Activated CD8-positive, alpha-beta T cell treated with anti-CD3 and anti-CD28 coated beads for 36 hours (primary cell): ENCODE measurements at regions of chr7 and their contacts with region 1.

Region 1: GRCh38 chr7:8190119-8190895 is 71.7 kb downstream of the ICA1 start:
- DNase-seq: peak; percentile 83
- ATAC-seq: peak; percentile 71
- H3K4me3 Mint-ChIP-seq: no peak overlapping the region
- H3K27ac Mint-ChIP-seq: no peak overlapping the region
- H3K4me1 Mint-ChIP-seq: peaks cover 17% of the 10 kb centered on the region
- H3K27me3 Mint-ChIP-seq: no peaks in the 10 kb centered on the region
- CTCF ChIP-seq: peak; percentile 79

Region 2: DNA sequence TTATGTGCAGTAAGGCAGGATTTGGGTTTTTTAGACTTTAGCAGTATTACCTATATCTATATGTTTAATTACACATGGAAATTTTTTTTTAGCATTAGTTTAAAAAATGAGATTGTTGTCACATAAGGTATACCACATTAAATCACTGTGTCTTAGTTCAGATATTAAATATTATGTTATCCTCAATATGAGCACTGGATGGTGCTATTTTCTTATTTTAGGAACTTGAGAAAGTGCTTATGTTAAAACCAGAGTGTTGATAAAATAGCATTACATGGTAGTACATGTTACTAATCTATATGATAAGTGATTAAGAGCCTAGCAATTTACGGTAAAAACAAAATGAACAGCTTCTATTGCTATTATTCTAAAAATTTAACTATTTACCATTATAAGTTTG is 594.9 kb before region 1 on chr7:
- CTCF ChIA-PET with region 1: interaction called, 12 read pairs
- POLR2A ChIA-PET with region 1: no interaction called
- intact Hi-C with region 1: no loop called
- DNase-seq: no peak
- ATAC-seq: no peak
- H3K4me3 Mint-ChIP-seq: no peak overlapping the region
- H3K27ac Mint-ChIP-seq: no peak overlapping the region
- H3K4me1 Mint-ChIP-seq: peaks cover 3% of the 10 kb centered on the region
- H3K27me3 Mint-ChIP-seq: no peaks in the 10 kb centered on the region
- CTCF ChIP-seq: no peak

Region 3: DNA sequence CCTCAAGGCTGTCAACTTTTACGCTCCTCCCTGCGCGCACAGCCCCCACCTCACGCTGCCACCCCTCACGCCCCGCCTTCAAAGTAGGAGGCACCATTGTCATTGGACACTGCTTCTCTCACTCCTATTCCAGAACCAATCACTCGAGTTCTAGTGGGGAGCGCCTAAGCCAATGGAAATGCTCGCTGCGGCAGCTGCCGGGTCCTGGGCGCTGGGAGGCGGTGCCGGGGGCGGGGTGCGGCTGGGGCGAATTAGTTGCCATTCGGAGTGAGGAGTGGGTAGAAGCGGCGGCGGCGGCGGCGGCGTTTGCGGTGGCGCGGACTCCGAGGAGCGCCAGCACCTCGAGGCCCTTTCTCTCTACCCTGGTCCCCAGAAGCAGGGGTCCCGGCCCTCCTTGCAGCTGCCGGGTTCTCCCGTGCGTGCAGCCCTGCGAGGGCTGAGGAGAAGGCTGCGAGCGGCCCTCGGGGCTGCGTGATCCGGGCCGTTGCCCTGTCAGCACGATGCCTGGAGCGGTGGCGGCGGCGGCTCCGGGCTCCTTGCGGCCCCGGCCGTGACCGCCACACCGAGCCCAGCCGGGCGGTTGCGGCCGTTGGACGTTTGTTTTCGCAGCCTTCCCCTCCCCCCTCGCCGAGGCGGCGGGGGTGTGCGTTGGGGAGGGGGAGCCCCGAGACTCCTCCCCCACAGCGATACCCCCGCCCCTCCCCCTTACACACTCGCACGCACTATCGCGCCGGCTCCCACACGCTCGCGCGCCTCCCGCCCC is 221.6 kb before region 1 on chr7 and contains the start of gene GLCCI1:
- CTCF ChIA-PET with region 1: interaction called, 11 read pairs
- POLR2A ChIA-PET with region 1: no interaction called
- intact Hi-C with region 1: no loop called
- DNase-seq: peak; percentile 98
- ATAC-seq: peak; percentile 92
- H3K4me3 Mint-ChIP-seq: peak within 1 kb of the TSS; percentile 93
- H3K27ac Mint-ChIP-seq: peak within 1 kb of the TSS; percentile 92
- H3K4me1 Mint-ChIP-seq: peaks cover 27% of the 10 kb centered on the region
- H3K27me3 Mint-ChIP-seq: no peaks in the 10 kb centered on the region
- CTCF ChIP-seq: no peak
- total RNA-seq, gene GLCCI1: 11.3 to 13.0 TPM

Region 4: DNA sequence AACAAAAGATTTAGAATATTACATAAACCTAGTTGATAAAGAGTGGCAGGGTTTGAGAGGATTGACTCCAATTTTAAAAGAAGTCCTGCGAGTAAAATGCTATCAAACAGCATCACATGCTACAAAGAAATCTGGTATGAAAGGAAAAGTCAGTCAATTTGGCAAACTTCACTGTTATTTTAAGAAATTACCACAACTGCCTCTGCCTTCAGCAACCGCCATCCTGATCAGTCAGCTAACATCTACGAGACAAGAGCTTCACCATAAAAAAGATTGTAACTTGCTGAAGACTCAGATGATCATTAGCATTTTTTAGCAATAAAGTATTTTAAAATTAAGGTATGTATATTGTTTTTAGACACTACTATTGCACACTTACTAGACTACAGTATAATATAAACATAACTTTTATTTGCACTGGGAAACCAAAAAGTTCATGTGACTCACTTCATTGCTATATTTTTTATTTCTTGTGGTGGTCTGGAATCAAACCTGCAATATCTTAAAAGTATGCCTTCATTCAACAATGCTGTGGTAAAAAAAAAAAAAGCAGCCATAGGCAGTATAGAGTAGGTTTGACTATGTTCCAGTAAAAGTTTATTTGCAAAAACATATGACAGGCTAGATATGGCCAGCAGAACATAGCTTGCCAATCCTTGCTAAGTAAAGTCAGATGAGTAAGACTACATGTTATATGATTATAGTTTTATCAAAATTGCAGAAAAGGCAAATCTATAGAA is 147.3 kb before region 1 on chr7:
- CTCF ChIA-PET with region 1: no interaction called
- POLR2A ChIA-PET with region 1: no interaction called
- intact Hi-C with region 1: no loop called
- DNase-seq: no peak
- ATAC-seq: no peak
- H3K4me3 Mint-ChIP-seq: no peak overlapping the region
- H3K27ac Mint-ChIP-seq: no peak overlapping the region
- H3K4me1 Mint-ChIP-seq: peaks cover 44% of the 10 kb centered on the region
- H3K27me3 Mint-ChIP-seq: no peaks in the 10 kb centered on the region
- CTCF ChIP-seq: no peak

Region 5: GRCh38 chr7:8125680-8126444 is 64.4 kb before region 1 on chr7:
- CTCF ChIA-PET with region 1: interaction called, 13 read pairs
- POLR2A ChIA-PET with region 1: no interaction called
- intact Hi-C with region 1: no loop called
- DNase-seq: peak; percentile 94
- ATAC-seq: peak; percentile 91
- H3K4me3 Mint-ChIP-seq: peak overlapping the region; percentile 63
- H3K27ac Mint-ChIP-seq: peak overlapping the region; percentile 98
- H3K4me1 Mint-ChIP-seq: peaks cover 78% of the 10 kb centered on the region
- H3K27me3 Mint-ChIP-seq: no peaks in the 10 kb centered on the region
- CTCF ChIP-seq: no peak

Region 6: DNA sequence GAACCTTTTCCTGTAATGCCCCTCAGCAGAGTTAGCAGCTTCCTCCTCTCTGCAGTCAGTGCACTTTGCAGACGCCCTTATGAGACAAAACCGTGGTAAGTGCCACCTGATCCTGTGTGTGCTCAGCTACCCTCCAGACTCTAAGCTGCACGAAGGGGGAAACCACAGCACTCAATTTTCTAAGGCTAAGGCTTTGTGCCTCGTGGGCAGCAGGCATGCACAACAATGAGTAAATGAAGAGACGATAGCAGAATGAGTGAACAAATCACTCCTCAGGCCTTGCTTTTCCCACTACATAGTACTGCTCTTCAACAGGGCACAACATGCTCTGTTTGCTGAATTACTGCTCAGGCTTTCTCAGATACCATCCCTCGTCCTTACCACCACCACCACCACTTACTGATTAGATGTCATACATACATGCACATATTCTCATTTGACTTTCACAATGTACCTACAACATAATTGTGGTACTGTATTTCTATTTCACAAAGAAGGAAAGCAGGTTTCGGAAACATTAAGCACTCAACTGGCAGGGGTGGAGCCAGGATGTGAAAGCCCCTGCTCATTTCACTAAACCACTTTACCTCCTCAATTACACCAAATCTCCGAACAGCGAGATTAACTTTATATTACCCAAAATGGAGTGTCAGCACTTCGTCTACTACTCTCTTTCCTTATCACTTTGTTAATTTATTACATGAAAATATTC is 13.8 kb before region 1 on chr7:
- CTCF ChIA-PET with region 1: interaction called, 24 read pairs
- POLR2A ChIA-PET with region 1: interaction called, 12 read pairs
- intact Hi-C with region 1: no loop called
- DNase-seq: peak; percentile 81
- ATAC-seq: peak; percentile 88
- H3K4me3 Mint-ChIP-seq: peak overlapping the region; percentile 65
- H3K27ac Mint-ChIP-seq: peak overlapping the region; percentile 95
- H3K4me1 Mint-ChIP-seq: peaks cover 55% of the 10 kb centered on the region
- H3K27me3 Mint-ChIP-seq: no peaks in the 10 kb centered on the region
- CTCF ChIP-seq: no peak

Region 7: DNA sequence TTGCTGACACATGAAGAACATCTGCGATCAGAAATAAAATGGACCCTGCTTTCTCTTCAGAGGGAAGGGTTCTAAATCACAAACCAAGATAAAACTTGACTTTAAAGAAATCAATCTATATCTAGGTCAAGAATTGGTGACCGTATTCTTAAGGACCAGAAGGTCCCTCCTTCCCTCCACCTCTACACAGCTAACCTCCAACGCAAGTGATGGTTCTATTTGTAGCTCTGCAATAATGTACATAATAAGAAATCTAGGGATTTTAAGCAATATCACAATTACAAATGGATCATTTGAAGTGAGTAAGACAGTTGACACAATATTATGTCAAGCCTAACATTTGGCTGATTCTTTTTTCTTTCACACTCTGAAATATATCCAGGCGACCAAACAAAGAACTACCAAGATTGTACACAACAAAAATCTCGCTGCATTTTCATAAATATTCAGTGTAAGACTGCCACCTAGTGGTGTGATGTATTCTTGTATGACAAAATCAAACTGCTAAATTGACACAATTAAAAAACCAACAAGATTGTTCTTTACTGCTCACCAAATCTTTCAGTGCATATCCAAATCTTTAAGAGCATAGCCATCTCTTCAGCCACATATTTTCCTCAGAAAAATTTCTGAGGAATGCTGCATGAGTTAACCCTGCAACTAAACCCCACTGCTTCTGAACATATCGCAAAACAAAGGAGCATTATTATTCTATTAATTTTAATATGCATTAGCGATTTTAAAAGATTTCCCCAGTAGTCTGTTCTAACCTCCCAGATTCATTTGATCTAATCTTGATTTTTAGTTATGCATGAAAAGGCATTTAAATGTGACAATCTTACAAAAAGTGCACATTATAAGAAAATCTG is 27.1 kb after region 1 on chr7:
- CTCF ChIA-PET with region 1: interaction called, 10 read pairs
- POLR2A ChIA-PET with region 1: no interaction called
- intact Hi-C with region 1: no loop called
- DNase-seq: peak; percentile 26
- ATAC-seq: peak; percentile 60
- H3K4me3 Mint-ChIP-seq: no peak overlapping the region
- H3K27ac Mint-ChIP-seq: no peak overlapping the region
- H3K4me1 Mint-ChIP-seq: peaks cover 2% of the 10 kb centered on the region
- H3K27me3 Mint-ChIP-seq: no peaks in the 10 kb centered on the region
- CTCF ChIP-seq: peak; percentile 86